Heart left ventricle (tissue), 16 donors: ENCODE measurements at regions of chr2 and their contacts with region 1.

Region 1: DNA sequence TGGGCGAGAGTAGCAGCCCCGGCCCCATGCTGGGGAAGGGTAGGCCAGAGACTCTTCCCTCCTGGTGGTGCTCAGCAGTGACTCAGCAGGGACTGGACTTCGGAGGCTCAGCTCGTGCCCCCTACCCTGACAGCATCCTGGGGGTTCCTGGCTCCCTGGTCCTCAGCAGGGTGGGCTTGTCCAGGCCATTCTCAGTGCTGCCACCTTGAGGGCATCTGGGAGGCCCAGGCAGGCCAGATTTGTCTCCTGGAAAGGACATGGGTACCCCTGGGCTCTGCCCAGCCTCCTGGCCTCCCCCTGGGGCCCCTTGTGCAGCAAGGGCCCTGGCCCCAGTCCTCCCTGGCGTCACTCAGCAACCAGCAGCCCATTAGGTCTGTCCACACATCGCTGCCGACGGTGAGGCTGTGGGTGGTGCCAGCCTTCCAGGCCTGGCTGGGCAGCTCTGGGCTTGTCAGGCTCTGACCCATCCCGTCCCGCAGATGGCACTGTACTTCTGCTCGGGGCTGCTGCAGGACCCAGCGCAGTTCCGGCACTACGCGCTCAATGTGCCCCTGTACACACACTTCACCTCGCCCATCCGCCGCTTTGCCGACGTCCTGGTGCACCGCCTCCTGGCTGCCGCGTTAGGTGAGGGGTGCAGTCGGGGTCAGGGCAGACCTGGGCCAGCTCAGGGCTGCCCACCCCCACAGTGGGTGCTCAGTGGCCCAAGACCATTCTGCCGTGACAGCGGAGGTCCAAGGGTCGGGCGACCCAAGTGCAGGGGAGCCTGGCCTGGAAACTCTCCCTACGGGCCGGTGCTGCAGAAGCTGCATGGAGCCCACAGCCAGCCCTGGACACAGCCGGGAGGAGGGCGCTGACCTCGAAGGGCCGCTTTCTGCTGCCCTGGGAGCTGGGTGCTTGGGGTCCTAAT is 44.9 kb upstream of the ALPP start:
- DNase-seq: peak in 3 of 5 donors; percentile 16 to 58 (median 18)
- ATAC-seq: no peak
- H3K4me3 ChIP-seq: no peak overlapping the region
- H3K27ac ChIP-seq: no peak overlapping the region
- H3K4me1 ChIP-seq: peaks cover 0 to 8% (median 0%) of the 10 kb centered on the region in 12 donors
- H3K27me3 ChIP-seq: no peaks in the 10 kb centered on the region
- CTCF ChIP-seq: peak in 5 of 12 donors; percentile 9 to 38 (median 18)
- POLR2A ChIP-seq: no peak

Region 2: DNA sequence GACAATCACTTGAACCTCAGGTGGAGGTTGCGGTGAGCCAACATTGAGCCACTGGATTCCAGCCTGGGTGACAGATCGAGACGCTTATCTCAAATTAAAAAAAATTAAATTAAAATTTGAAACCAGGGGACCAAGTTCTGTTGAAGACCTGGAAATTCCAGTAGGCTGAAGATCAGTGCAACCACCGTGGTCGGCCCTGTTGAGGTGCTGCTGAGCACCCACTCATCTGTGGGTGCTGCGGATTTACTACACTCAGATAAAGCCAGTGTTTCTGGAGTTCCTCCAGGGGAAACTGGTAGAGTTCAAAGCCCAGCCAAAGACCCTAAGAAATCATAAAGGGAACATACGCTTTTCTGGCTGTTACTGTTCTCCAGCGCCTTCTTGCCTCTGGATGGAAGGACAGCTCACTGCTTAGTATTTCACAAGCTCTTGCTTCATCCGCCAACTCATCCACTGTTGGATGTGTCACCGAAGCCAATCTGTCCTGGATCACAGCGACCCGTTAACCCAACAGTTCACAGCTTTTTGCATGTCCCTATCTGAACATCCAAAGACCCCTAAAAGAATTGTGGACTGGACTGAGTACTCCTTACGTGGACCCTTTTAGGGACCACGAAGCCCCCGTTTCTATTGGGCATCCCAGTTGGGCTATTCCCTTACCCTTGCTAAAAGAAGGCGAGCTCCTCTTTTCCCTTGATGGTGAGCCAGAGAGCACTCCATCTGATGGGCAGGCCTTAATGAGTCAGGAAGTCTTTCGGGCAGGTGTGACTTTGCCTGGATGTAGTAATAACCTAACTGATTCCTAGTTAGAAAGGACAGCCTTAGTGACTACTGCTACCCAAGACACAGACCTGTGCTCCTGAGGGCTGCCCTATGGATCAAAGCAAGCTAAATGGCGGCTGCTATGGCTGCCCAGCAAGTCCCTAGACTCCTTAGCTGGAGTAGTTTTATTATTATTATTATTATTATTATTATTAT is 38.9 kb after region 1 on chr2:
- intact Hi-C with region 1: no loop called
- DNase-seq: peak in 1 of 5 donors; percentile 4
- ATAC-seq: no peak
- H3K4me3 ChIP-seq: no peak overlapping the region
- H3K27ac ChIP-seq: no peak overlapping the region
- H3K4me1 ChIP-seq: no peaks in the 10 kb centered on the region
- H3K27me3 ChIP-seq: peaks cover 0 to 9% (median 0%) of the 10 kb centered on the region in 9 donors
- CTCF ChIP-seq: no peak
- POLR2A ChIP-seq: no peak

Region 3: DNA sequence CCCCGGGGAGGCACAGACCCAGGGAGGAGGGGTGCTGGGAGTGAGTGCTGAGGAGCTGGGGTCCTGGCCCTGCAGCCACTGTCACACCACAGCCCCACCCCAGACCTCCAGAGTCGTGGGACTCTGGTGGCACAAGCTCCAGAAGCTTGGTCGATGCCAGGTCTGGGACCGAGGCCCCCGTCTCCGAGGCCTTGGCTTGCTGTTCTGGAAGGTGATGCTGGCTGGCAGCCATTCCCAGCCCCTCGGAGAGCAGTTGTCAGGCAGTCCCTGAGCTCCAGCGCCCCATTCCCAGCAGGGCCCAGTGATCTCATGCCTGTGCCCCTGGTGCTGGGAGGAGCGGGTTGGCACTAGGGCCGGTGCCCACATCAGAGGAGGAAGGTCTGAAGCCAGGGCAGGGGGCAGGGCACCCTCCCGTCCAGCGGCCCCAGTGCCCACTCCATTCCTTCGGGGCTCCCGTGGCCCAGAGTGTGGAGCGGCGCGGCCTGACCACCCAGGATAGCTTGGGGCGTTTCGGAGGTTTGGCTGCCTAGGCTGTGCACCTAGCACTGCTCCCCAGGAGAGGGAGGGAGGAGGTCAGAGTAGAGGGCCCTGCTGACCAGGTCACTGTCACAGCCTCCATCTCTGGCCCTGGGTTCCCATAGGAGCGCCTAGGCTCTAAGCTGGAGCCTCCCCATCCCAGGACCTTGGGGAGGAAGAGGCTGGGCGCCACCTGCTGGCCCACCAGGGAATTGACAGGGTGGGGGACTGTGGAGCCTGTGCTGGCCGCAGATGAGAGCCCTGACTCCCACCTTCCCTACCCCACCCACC is 105.5 kb after region 1 on chr2:
- intact Hi-C with region 1: loop called in 2 of 10 experiments (anchors 10 kb)
- DNase-seq: peak in 1 of 5 donors; percentile 60
- ATAC-seq: peak; percentile 30 to 58 (median 56)
- H3K4me3 ChIP-seq: no peak overlapping the region
- H3K27ac ChIP-seq: no peak overlapping the region
- H3K4me1 ChIP-seq: peaks cover 0 to 4% (median 0%) of the 10 kb centered on the region in 12 donors
- H3K27me3 ChIP-seq: peaks cover 0 to 6% (median 0%) of the 10 kb centered on the region in 9 donors
- CTCF ChIP-seq: peak; percentile 40 to 68 (median 54)
- POLR2A ChIP-seq: no peak

Region 4: GRCh38 chr2:232444409-232445148 is 111.0 kb after region 1 on chr2:
- intact Hi-C with region 1: loop called in 2 of 10 experiments (anchors 10 kb)
- DNase-seq: peak in 1 of 5 donors; percentile 55
- ATAC-seq: no peak
- H3K4me3 ChIP-seq: no peak overlapping the region
- H3K27ac ChIP-seq: no peak overlapping the region
- H3K4me1 ChIP-seq: peaks cover 0 to 4% (median 0%) of the 10 kb centered on the region in 12 donors
- H3K27me3 ChIP-seq: no peaks in the 10 kb centered on the region
- CTCF ChIP-seq: peak; percentile 14 to 66 (median 37)
- POLR2A ChIP-seq: no peak

Region 5: GRCh38 chr2:232521959-232522622 is 188.5 kb after region 1 on chr2:
- intact Hi-C with region 1: loop called in 1 of 10 experiments (anchors 5 kb)
- DNase-seq: peak; percentile 39 to 83 (median 52)
- ATAC-seq: peak in 2 of 4 donors; percentile 35 to 61
- H3K4me3 ChIP-seq: peak overlapping the region in 10 of 12 donors; percentile 3 to 40 (median 16)
- H3K27ac ChIP-seq: no peak overlapping the region
- H3K4me1 ChIP-seq: peaks cover 0 to 44% (median 21%) of the 10 kb centered on the region in 12 donors
- H3K27me3 ChIP-seq: peaks cover 30 to 72% (median 47%) of the 10 kb centered on the region in 9 donors
- CTCF ChIP-seq: peak; percentile 79 to 96 (median 90)
- POLR2A ChIP-seq: no peak